Endothelial cell of umbilical vein (primary cell): ENCODE measurements at regions of chr1 and their contacts with region 1.

Region 1: DNA sequence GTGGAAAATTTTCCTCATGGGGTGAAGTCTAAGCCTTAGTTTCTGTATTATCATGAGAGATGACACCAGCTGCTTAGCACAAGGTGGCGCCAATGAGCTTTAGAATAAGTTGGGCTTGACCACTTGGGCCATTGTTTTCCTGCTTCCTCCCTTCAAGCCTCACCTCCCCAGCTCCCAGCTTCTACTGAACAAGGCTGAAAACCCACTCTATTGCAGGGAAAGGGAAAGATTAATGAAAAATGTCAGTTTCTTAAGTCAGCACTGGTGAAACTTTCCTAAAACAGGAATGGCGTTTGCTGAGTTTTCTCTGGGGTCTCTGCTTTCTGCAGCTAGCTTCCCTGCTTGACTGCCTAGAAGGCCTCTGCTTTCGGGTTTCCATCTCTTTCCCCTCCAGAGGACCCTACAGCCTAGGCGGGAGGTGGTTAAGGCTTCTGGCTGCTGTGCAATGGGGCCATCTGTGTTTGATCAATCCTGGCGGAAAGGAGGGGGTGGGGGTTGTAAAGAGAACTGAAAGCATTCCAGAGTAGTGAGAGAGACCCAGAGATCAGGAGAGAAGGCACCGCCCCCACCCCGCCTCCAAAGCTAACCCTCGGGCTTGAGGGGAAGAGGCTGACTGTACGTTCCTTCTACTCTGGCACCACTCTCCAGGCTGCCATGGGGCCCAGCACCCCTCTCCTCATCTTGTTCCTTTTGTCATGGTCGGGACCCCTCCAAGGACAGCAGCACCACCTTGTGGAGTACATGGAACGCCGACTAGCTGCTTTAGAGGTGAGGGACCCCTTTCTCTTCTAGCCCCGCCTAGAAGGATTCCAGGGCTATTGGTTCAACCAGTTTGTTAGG is at the start of gene OLFML3:
- DNase-seq: peak; percentile 86
- H3K4me3 ChIP-seq: no peak within 1 kb of the TSS
- H3K27ac ChIP-seq: peak within 1 kb of the TSS; percentile 44
- H3K4me1 ChIP-seq: peaks cover 46% of the 10 kb centered on the region
- H3K27me3 ChIP-seq: no peaks in the 10 kb centered on the region
- CTCF ChIP-seq: peak; percentile 60 to 64
- POLR2A ChIP-seq: no peak
- total RNA-seq, gene OLFML3: 1.7 and 3.4 TPM in 2 replicates

Region 2: GRCh38 chr1:113904674-113905434 is 74.2 kb before region 1 on chr1 and contains the starts of genes AP4B1 and DCLRE1B:
- CTCF ChIA-PET with region 1: no interaction called
- POLR2A ChIA-PET with region 1: no interaction called
- dilution Hi-C with region 1: no loop called
- intact Hi-C with region 1: loop called (anchors 2 kb)
- DNase-seq: peak; percentile 100
- H3K4me3 ChIP-seq: peak within 1 kb of the TSS; percentile 55 to 86 (median 60)
- H3K27ac ChIP-seq: peak within 1 kb of the TSS; percentile 72
- H3K4me1 ChIP-seq: peaks cover 12% of the 10 kb centered on the region
- H3K27me3 ChIP-seq: no peaks in the 10 kb centered on the region
- CTCF ChIP-seq: peak; percentile 60 to 73
- POLR2A ChIP-seq: peak; percentile 96
- total RNA-seq, gene AP4B1: 29.4 and 33.0 TPM in 2 replicates
- total RNA-seq, gene DCLRE1B: 10.7 and 10.8 TPM in 2 replicates

Region 3: GRCh38 chr1:113963281-113963906 is 15.7 kb before region 1 on chr1:
- CTCF ChIA-PET with region 1: interaction called, 17 read pairs
- POLR2A ChIA-PET with region 1: no interaction called
- dilution Hi-C with region 1: no loop called
- intact Hi-C with region 1: no loop called
- DNase-seq: no peak
- H3K4me3 ChIP-seq: no peak overlapping the region
- H3K27ac ChIP-seq: no peak overlapping the region
- H3K4me1 ChIP-seq: no peaks in the 10 kb centered on the region
- H3K27me3 ChIP-seq: no peaks in the 10 kb centered on the region
- CTCF ChIP-seq: no peak
- POLR2A ChIP-seq: no peak

Region 4: DNA sequence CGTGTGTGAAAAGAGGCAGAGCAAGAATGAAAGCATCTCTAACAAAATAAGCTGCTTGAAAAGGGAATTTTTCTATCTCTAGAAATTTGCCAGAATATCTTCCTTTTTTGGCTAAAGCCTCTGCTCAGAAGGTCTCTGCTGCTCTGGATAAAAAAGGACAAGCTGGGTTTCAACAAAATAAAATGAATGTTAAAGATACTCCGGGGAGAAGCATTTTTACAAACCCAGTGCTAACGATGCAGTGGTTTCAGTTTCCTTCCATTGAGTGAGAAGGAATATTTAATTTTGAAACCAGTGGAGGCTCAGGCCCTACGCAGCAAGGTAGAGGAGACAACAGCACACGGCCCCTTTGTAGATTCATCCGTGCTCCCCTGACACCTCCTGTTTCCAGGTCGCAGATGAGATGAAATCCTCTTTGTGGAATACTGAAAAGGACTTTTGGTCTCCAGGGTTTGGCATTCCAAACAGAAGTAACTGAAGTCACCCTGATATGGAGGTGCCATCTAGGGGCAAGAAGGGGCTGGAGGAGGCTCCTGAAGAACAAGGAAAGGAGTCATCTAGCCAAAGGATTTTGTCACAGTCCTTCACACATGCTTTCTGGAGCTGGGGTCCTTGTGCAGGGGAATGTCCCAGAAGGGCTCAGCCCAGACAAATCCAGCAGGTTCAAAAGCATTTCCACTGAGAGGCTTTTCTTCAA is 240.2 kb after region 1 on chr1:
- CTCF ChIA-PET with region 1: interaction called, 7 read pairs
- POLR2A ChIA-PET with region 1: no interaction called
- dilution Hi-C with region 1: no loop called
- intact Hi-C with region 1: loop called (anchors 5 kb)
- DNase-seq: no peak
- H3K4me3 ChIP-seq: no peak overlapping the region
- H3K27ac ChIP-seq: no peak overlapping the region
- H3K4me1 ChIP-seq: no peaks in the 10 kb centered on the region
- H3K27me3 ChIP-seq: no peaks in the 10 kb centered on the region
- CTCF ChIP-seq: peak in 1 of 2 donors; percentile 4
- POLR2A ChIP-seq: no peak

Region 5: GRCh38 chr1:114346480-114347029 is 367.5 kb after region 1 on chr1:
- CTCF ChIA-PET with region 1: interaction called, 8 read pairs
- POLR2A ChIA-PET with region 1: no interaction called
- dilution Hi-C with region 1: no loop called
- intact Hi-C with region 1: loop called (anchors 1 kb)
- DNase-seq: peak; percentile 94
- H3K4me3 ChIP-seq: peak overlapping the region; percentile 15 to 63 (median 35)
- H3K27ac ChIP-seq: no peak overlapping the region
- H3K4me1 ChIP-seq: peaks cover 7% of the 10 kb centered on the region
- H3K27me3 ChIP-seq: peaks cover 0 to 2% of the 10 kb centered on the region in 2 experiments
- CTCF ChIP-seq: peak; percentile 100
- POLR2A ChIP-seq: no peak

Region 6: GRCh38 chr1:114581335-114582287 is 602.5 kb after region 1 on chr1 and contains the start of gene BCAS2:
- CTCF ChIA-PET with region 1: no interaction called
- POLR2A ChIA-PET with region 1: no interaction called
- dilution Hi-C with region 1: no loop called
- intact Hi-C with region 1: loop called (anchors 10 kb)
- DNase-seq: peak; percentile 98
- H3K4me3 ChIP-seq: peak within 1 kb of the TSS; percentile 66 to 96 (median 85)
- H3K27ac ChIP-seq: peak within 1 kb of the TSS; percentile 68
- H3K4me1 ChIP-seq: peaks cover 7% of the 10 kb centered on the region
- H3K27me3 ChIP-seq: no peaks in the 10 kb centered on the region
- CTCF ChIP-seq: no peak
- POLR2A ChIP-seq: peak; percentile 93
- total RNA-seq, gene BCAS2: 41.7 and 43.5 TPM in 2 replicates

Region 7: DNA sequence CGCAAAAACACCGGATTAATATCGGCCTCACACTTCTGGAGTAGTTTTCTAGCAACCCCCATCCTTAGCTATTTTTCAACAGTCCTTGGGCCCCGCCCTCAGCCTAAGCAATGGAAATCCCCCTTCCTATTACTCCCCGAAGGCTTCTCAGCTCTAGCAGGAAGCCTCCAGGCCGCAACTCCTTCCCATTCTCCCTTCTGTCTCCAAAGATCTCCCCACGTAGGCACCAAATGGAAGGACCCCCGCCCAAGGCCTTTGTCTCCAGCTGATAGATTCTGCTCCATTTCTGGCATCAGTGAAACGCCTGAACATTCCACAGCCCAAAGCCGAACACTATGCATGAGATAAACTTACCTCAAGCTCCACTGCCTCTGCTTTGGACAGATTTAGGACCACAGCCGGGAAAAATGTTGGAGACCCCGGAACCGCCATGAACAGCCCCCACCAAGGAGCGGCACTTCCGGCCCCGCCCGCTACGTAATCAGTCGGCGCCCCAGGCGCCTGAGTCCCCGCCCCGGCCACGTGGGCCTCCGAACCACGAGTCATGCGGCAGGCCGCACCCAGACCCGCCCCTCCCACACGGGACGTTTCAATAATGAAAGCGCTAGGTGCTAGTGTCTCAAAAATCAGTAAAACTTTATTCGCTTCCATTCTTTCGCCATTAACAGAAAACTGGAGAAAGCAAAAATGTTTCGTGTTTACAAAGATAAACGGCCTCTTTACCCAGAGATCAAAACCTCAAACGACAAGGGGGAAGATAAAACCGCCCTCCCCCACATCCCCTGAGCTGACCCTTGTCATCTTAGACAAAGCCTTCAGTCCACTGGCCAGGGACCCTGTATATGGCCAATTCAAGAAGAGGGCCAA is 737.5 kb after region 1 on chr1 and contains the start of gene NRAS:
- CTCF ChIA-PET with region 1: interaction called, 3 read pairs
- POLR2A ChIA-PET with region 1: no interaction called
- dilution Hi-C with region 1: no loop called
- intact Hi-C with region 1: loop called (anchors 5 kb)
- DNase-seq: peak; percentile 91
- H3K4me3 ChIP-seq: peak within 1 kb of the TSS; percentile 94 to 100 (median 100)
- H3K27ac ChIP-seq: peak within 1 kb of the TSS; percentile 100
- H3K4me1 ChIP-seq: peaks cover 24% of the 10 kb centered on the region
- H3K27me3 ChIP-seq: no peaks in the 10 kb centered on the region
- CTCF ChIP-seq: no peak
- POLR2A ChIP-seq: peak; percentile 85
- total RNA-seq, gene NRAS: 76.5 and 78.7 TPM in 2 replicates